ENCODE measurements at regions of chr1 and their contacts with region 1.

Region 1: DNA sequence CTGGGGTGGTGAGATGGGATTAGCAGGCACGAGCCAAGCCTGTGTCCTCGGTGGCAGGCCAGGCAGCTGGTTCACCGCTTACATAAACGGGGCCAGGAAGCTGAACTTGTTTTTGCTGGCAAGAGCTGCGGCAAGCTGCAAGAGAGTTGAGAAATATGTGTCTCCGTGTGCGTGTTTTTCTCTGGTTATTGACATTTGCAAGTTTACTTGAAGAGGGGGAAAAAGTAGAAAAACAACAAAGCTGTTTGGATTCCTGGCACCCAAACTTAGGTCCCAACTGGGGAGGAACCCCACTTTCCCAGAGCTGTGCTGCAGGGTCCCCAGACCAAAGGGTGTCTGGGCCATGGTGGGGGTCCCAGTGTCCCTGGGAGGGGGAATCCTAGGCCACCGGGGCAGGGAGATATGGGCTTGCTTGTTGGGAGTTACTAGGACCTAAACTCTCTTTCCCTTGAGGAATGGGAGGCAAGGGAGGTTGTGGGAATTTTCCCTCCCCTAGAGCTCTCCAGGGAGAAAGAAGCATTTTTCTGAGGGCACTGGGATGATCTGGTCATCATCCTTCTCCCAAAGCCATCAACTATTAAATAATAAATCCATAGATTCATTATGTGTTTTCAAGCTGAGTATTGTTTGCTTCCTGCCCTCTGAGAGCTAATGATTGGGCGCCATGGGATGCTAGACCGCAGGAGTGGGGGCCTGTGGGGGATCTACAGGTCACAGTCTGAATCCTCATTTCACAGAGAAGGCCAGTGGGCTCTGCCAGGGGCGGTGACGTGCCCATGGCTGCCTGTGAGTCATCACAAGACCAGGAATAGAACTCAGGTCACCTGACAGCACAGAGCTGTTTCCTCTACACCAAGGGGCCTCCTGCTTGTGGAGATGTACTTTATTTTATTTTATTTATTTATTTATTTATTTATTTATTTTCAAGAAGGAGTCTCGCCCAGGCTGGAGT is 14.8 kb downstream of the IL6R start:
- DNase-seq: peak; percentile 94 to 97 (median 96)
- H3K4me3 ChIP-seq: peak overlapping the region in 1 of 3 experiments; percentile 52
- H3K4me3 Mint-ChIP-seq: peak overlapping the region; percentile 57 to 68
- H3K27ac ChIP-seq: peak overlapping the region; percentile 97 to 98
- H3K27ac Mint-ChIP-seq: peak overlapping the region; percentile 94 to 96 (median 95)
- H3K4me1 ChIP-seq: peaks cover 79 to 82% of the 10 kb centered on the region in 2 donors
- H3K4me1 Mint-ChIP-seq: peaks cover 85% of the 10 kb centered on the region
- H3K27me3 ChIP-seq: no peaks in the 10 kb centered on the region
- H3K27me3 Mint-ChIP-seq: no peaks in the 10 kb centered on the region
- CTCF ChIP-seq: no peak

Region 2: DNA sequence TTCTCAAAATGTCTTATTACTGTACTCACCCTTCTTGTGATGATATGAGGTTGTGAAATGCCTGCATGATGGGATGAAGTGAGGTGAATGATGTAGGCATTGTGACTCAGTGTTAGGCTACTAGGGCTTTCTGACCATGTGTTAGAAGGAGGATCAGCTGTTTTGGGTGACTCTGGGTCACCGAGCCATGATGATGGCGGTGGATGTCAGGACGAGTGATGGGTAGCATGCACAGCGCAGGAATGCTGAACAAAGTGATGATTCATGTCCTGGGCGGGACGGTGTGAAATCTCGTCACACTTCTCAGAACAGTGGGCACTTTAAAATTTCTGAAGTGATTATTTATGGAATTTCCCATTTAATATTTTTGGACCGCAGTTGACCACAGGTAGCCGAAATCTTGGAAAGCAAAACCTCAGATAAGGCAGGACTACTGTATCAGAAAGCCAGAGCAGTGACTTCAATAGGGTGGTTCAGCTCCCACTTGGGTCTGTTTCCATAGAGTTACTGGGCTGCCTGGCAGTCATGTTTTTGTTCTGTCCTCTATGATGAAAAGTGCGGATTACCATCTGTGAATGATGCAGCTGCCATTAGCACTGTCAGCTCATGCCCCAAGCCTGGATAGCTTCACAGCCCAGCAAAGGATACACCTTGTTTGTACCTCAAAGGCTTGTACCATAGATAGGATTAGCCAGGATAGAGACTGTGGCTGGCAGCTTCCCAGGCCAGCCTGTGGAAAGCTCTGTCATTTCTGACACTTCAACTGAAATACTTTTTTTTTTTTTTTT is 11.9 kb after region 1 on chr1:
- intact Hi-C with region 1: loop called in 1 of 2 experiments (anchors 1 kb)
- DNase-seq: peak; percentile 97 to 100 (median 99)
- H3K4me3 ChIP-seq: peak overlapping the region in 1 of 3 experiments; percentile 10
- H3K4me3 Mint-ChIP-seq: peak overlapping the region in 1 of 2 donors; percentile 54
- H3K27ac ChIP-seq: peak overlapping the region; percentile 98 to 99
- H3K27ac Mint-ChIP-seq: peak overlapping the region; percentile 95 to 99 (median 98)
- H3K4me1 ChIP-seq: peaks cover 44 to 57% of the 10 kb centered on the region in 2 donors
- H3K4me1 Mint-ChIP-seq: peaks cover 57% of the 10 kb centered on the region
- H3K27me3 ChIP-seq: no peaks in the 10 kb centered on the region
- H3K27me3 Mint-ChIP-seq: peaks cover 0 to 3% (median 0%) of the 10 kb centered on the region in 3 donors
- CTCF ChIP-seq: no peak

Region 3: DNA sequence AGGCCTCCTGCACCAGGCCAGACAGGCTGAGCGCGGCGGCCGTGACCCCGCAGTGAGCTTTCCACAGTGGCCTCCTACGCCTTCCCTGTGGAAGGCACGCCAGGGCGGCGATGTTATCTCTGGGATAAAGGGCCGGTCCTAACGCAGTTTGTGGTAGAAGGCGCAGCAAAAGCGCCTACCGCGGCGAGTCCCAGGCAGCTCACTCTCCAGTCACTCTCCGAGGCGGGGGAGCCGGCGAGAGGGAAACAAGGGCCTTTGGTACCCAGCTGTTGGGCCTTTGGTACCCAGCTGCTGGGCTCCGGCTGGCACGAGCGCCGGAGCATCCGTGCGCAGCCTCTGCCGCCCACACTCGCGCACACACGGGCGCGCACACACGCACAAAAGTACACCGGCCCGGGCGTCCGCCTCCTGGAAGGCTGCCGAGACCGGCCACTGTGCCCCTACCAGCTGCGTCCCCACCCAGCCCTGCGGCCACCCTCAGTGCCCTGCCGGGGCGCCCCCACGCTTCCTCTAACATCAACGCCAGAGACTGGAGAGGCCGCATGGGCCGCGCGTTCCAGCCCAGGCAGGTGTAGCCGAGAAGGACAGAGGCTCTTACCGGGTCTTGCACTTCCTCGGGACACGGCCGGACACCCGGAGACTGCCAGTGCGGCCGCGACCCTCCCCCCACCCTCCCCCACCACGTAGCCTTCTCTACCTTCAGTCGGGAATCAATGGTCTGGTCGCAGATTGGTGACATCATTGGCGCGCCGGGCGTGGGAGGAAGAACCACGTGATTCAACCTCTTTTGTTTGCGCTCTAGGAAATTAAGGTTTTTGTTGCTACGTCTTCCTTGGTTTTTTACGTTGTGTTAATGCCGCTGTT is 207.6 kb after region 1 on chr1:
- intact Hi-C with region 1: no loop called
- DNase-seq: peak; percentile 81 to 87 (median 84)
- H3K4me3 ChIP-seq: peak overlapping the region; percentile 85 to 91 (median 91)
- H3K4me3 Mint-ChIP-seq: peak overlapping the region; percentile 86 to 95
- H3K27ac ChIP-seq: peak overlapping the region; percentile 86 to 87
- H3K27ac Mint-ChIP-seq: peak overlapping the region; percentile 94 to 99 (median 98)
- H3K4me1 ChIP-seq: peaks cover 27 to 29% of the 10 kb centered on the region in 2 donors
- H3K4me1 Mint-ChIP-seq: peaks cover 35% of the 10 kb centered on the region
- H3K27me3 ChIP-seq: peaks cover 0 to 4% of the 10 kb centered on the region in 2 donors
- H3K27me3 Mint-ChIP-seq: peaks cover 7 to 14% (median 13%) of the 10 kb centered on the region in 3 donors
- CTCF ChIP-seq: no peak